GM10248 (cell line): ENCODE measurements at regions of chr1 and their contacts with region 1.

Region 1: GRCh38 chr1:110053557-110054428 is 16.7 kb downstream of the ALX3 start:
- DNase-seq: peak; percentile 80
- CTCF ChIP-seq: peak; percentile 90

Region 2: DNA sequence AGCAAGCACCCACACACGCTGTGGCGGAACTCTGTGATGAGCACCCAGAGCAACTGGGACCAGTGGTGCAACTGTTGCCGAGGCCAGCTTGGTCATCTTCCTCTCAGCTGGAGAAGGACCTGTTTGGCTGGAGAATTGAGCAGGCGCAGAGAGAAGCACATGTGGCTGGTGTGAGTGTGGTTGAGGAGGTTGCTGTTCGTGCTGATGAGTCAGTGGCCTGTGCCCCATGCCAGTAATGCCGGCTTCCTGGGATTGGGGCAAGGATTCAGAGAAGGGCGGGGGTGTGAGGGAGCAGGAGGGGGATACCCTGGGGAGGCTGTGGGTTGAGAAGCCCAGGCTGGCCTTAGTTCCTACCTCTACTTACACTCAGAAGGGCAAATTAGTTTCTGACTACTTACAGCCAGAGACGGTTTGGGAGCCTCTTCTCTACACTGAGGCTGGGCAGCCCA is 232.5 kb before region 1 on chr1:
- CTCF ChIA-PET with region 1: no interaction called
- POLR2A ChIA-PET with region 1: no interaction called
- DNase-seq: peak; percentile 12
- CTCF ChIP-seq: no peak

Region 3: DNA sequence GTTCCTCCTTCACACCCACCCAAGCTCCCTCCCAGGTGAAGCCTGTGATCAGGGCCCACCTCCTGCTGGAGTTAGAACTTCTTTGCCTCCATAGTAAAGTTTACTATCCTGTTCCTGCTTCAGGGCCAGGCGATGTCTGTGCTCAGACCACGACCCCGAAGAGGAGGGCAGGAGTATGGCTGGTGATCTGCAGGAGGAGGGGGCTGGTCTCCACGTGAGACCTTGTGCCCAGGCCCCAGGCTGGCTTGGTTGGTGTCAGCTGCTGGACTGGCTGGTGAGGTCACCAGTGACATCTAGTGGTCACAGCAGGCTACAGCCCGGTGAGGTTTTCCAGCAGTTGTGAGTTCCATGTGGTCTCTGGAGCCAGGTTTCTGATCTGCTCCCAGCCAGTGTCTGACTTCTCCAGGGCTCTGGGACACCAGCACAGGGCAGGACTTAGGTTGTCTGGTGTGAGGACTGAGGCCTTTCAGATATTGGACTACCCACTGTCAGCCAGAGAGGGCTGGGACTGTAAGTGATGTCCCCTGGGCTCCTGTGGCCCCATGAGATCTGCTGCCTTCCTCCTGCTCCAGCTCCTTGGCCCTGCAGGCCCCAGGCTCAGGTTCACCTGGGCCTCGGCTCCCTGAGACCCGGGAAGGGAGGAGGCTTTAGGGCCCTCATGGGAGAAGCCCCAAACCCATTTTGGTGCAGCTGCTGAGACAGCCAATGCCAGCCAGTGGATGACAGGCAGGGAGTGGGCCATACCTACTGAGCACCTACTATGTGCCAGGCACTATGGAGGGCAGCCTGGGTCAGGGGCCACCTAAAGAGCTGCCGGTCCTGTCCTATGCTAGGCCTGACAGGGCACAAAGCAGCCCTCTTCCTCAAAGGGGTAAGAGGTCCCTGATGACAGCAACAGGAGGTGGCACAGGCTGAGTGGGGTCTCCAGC is 52.5 kb after region 1 on chr1:
- CTCF ChIA-PET with region 1: interaction called, 112 read pairs
- POLR2A ChIA-PET with region 1: no interaction called
- DNase-seq: peak; percentile 85
- CTCF ChIP-seq: peak; percentile 96

Region 4: GRCh38 chr1:110112656-110113055 is 58.9 kb after region 1 on chr1:
- CTCF ChIA-PET with region 1: interaction called, 112 read pairs
- POLR2A ChIA-PET with region 1: no interaction called
- DNase-seq: no peak
- CTCF ChIP-seq: no peak

Region 5: DNA sequence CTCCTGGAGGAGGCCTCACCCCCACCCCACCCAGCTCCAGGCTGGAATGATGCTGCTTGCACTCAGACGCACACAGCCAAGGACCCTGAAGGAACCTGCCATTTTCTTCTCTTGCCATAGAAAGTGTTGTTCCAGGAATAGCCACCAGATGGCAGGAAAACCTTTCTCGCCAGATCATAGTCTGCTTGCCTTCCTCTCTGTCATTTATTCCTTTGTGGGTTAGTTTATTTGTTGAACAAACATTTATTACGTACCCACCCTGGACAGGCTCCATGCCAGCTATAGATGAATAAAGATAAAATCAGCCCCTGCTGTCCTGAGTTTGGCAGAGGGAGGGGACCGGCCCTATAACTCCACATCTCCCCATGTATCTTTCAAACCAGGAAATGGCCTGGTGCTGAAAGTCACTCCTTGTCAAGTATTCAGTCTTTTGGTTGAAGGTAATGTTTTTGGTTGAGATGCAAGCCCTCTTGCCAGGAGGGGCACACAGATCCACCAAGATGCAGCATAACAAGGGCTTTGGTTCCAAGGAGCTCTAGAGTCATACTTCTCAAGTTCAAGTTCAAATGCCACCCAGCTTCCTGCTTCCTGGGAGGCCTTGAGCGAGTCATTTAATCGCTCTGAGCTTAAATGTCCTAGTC is 149.3 kb after region 1 on chr1:
- CTCF ChIA-PET with region 1: no interaction called
- POLR2A ChIA-PET with region 1: no interaction called
- DNase-seq: peak; percentile 78
- CTCF ChIP-seq: peak; percentile 81